IMR-90 (cell line): ENCODE measurements at regions of chr12 and their contacts with region 1.

Region 1: GRCh38 chr12:122406701-122407164 is 15.7 kb downstream of the CLIP1 start:
- DNase-seq: peak; percentile 78
- ATAC-seq: peak; percentile 74
- H3K4me3 ChIP-seq: no peak overlapping the region
- H3K27ac ChIP-seq: peak overlapping the region; percentile 54; the same call in 1 of the 2 replicates
- H3K4me1 ChIP-seq: peaks cover 5% of the 10 kb centered on the region; the same call in 1 of the 2 replicates
- H3K27me3 ChIP-seq: no peaks in the 10 kb centered on the region
- CTCF ChIP-seq: no peak
- POLR2A ChIP-seq: no peak
- RAD21 ChIP-seq: no peak

Region 2: DNA sequence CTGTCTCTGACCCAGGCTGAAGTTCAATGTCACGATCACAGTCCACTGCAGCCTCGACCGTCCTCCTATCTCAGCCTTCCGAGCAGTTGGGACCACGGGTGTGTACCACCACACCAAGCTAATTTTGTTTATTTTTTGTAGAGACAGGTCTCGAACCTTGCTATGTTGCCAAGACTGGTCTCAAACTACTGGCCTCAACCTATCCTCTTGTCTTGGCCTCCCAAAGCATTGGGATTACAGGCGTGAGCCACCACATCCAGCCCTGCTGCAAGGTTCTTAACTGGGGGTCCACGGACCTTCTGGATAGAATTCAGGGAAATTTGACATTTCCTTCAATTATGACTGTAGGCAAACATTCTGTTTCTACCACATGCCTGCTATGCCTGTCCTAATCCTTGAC is 57.1 kb after region 1 on chr12:
- CTCF ChIA-PET with region 1: interaction called, 6 read pairs
- POLR2A ChIA-PET with region 1: interaction called, 4 read pairs
- dilution Hi-C with region 1: no loop called
- in situ Hi-C with region 1: loop called (anchors 5 kb)
- intact Hi-C with region 1: no loop called
- DNase-seq: no peak
- ATAC-seq: no peak
- H3K4me3 ChIP-seq: no peak overlapping the region
- H3K27ac ChIP-seq: 0 out of 2 replicates have a peak overlapping the region, but pooled peaks have one; percentile 6
- H3K4me1 ChIP-seq: peaks cover 2% of the 10 kb centered on the region; the same call in 1 of the 2 replicates
- H3K27me3 ChIP-seq: no peaks in the 10 kb centered on the region
- CTCF ChIP-seq: no peak
- POLR2A ChIP-seq: no peak
- RAD21 ChIP-seq: no peak

Region 3: GRCh38 chr12:122526683-122527477 is 120.1 kb after region 1 on chr12 and contains the starts of genes KNTC1 and RSRC2:
- CTCF ChIA-PET with region 1: no interaction called
- POLR2A ChIA-PET with region 1: no interaction called
- dilution Hi-C with region 1: no loop called
- in situ Hi-C with region 1: no loop called
- intact Hi-C with region 1: no loop called
- DNase-seq: peak; percentile 100
- ATAC-seq: peak; percentile 97
- H3K4me3 ChIP-seq: peak within 1 kb of the TSS; percentile 70
- H3K27ac ChIP-seq: peak within 1 kb of the TSS; percentile 96
- H3K4me1 ChIP-seq: peaks cover 4% of the 10 kb centered on the region
- H3K27me3 ChIP-seq: no peaks in the 10 kb centered on the region
- CTCF ChIP-seq: no peak
- POLR2A ChIP-seq: peak; percentile 99
- RAD21 ChIP-seq: no peak
- total RNA-seq, gene KNTC1: 23.7 and 32.8 TPM in 2 replicates
- total RNA-seq, gene RSRC2: 18.6 and 41.7 TPM in 2 replicates